Activated naive CD4-positive, alpha-beta T cell treated with anti-CD3 and anti-CD28 coated beads, Interleukin-2, amount 10 ng/mL, durations not matched to agents 7 days and 5 days (primary cell): ENCODE measurements at regions of chr17 and their contacts with region 1.

Region 1: GRCh38 chr17:61551255-61551742 is 39.7 kb downstream of the NACA2 start:
- DNase-seq: no peak
- H3K4me3 Mint-ChIP-seq: no peak overlapping the region
- H3K27ac Mint-ChIP-seq: no peak overlapping the region
- H3K4me1 Mint-ChIP-seq: peaks cover 4% of the 10 kb centered on the region
- H3K27me3 Mint-ChIP-seq: peaks cover 29% of the 10 kb centered on the region

Region 2: GRCh38 chr17:61412143-61412859 is 139.0 kb before region 1 on chr17:
- CTCF ChIA-PET with region 1: interaction called, 10 read pairs
- DNase-seq: peak; percentile 78
- H3K4me3 Mint-ChIP-seq: peak overlapping the region; percentile 60
- H3K27ac Mint-ChIP-seq: no peak overlapping the region
- H3K4me1 Mint-ChIP-seq: peaks cover 26% of the 10 kb centered on the region
- H3K27me3 Mint-ChIP-seq: peaks cover 98% of the 10 kb centered on the region

Region 3: GRCh38 chr17:61720016-61720795 is 168.9 kb after region 1 on chr17:
- CTCF ChIA-PET with region 1: no interaction called
- DNase-seq: no peak
- H3K4me3 Mint-ChIP-seq: no peak overlapping the region
- H3K27ac Mint-ChIP-seq: no peak overlapping the region
- H3K4me1 Mint-ChIP-seq: no peaks in the 10 kb centered on the region
- H3K27me3 Mint-ChIP-seq: no peaks in the 10 kb centered on the region

Region 4: GRCh38 chr17:61970019-61970418 is 418.7 kb after region 1 on chr17:
- CTCF ChIA-PET with region 1: no interaction called
- DNase-seq: no peak
- H3K4me3 Mint-ChIP-seq: no peak overlapping the region
- H3K27ac Mint-ChIP-seq: peak overlapping the region; percentile 14
- H3K4me1 Mint-ChIP-seq: peaks cover 2% of the 10 kb centered on the region
- H3K27me3 Mint-ChIP-seq: no peaks in the 10 kb centered on the region